Head of caudate nucleus (tissue), 42 donors: ENCODE measurements at regions of chr17 and their contacts with region 1.

Region 1: DNA sequence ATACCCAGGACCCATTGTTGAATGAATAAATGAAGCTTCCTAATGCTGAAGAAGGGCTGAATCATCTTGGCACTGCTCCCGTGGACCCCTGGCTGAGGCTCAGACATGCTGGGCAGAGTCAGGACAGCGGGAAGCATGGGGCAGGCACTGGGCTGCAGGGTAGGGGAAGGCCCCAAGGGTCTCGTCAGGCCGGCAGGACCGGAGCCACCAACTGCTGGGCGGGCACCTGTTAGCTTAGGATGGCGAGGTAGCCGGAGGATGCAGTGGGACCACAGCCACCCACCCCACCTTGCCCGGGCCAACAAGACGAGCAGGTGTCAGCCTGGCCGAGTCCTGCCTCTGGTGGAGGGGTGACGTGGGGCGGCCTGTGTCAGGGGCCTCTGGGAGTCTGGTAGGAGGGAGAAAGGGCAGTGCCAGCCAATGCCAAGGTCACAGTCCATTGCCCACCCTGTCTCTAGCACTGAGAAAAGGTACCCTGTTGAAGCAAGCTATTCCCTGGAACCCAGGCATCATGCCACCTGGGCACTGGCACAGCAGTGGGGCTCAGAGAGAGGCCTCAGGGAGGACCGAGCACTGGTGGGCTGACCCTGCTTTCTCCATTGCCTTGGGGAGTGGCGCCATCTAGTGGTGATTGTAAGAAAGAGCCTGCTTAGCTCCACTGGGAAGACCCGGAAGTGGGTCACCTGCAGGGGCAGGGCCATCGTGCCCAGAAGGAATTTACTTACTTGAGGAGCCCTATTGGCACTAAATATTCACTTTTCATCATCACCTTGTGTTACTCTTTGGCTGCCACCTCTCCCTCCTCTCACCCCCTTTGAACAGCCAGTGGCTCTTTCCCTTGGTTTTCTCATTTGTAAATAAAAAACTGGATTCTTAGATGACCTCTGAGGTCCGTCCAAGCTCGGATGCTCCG is 3.0 kb upstream of the DLX3 start:
- DNase-seq: peak; percentile 45 to 89 (median 74)

Region 2: DNA sequence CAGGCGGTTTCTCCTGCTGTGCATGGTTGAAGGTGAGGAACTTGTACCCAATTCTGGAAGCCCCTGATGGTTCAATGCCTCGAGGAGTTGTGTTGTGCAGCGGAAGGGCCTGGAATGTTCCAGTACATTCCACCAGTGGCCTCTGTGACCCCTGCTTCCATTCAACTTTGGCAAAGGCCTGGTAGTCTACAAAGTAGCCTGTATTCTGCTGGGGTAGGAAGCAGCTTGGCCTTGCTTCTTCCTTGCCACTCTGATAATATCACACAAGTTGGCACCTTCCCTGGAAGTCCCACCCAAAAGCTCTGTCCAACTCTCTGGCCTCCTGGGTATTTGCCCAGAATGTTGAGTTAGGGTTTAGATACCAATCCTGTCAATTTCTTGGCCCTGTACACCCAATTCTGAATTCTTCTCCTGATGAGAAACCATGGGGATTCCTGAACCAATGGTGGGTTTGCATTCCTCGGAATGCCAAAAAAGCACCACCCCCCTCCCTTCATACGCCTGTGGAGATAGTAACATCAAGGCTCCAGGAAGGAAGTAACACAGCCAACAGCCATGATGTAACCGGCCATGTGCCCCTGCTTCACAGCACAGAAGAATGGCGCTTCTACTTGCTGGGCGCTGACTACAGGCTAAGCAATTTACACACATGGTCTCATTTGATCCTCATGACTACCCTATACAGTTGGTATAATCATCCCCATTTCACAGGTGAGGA is 222.3 kb before region 1 on chr17:
- intact Hi-C with region 1: no loop called
- DNase-seq: no peak

Region 3: GRCh38 chr17:49861150-49861892 is 136.7 kb before region 1 on chr17:
- intact Hi-C with region 1: loop called (anchors 5 kb)
- DNase-seq: peak in 38 of 42 donors; percentile 7 to 79 (median 53)

Region 4: GRCh38 chr17:49880291-49881053 is 117.6 kb before region 1 on chr17:
- intact Hi-C with region 1: loop called (anchors 5 kb)
- DNase-seq: peak; percentile 35 to 86 (median 68)

Region 5: GRCh38 chr17:49928837-49929475 is 69.1 kb before region 1 on chr17:
- intact Hi-C with region 1: no loop called
- DNase-seq: no peak

Region 6: GRCh38 chr17:49952209-49952911 is 45.7 kb before region 1 on chr17:
- intact Hi-C with region 1: loop called (anchors 5 kb)
- DNase-seq: peak; percentile 43 to 86 (median 74)